MCF 10A (cell line): ENCODE measurements at regions of chr19 and their contacts with region 1.

Region 1: GRCh38 chr19:41641879-41642485 is 15.1 kb upstream of the CEACAM4 start:
- DNase-seq: peak; percentile 73
- H3K4me3 Mint-ChIP-seq: no peak overlapping the region
- H3K27ac Mint-ChIP-seq: no peak overlapping the region
- H3K4me1 Mint-ChIP-seq: no peaks in the 10 kb centered on the region
- H3K27me3 Mint-ChIP-seq: peaks cover 16% of the 10 kb centered on the region
- CTCF ChIP-seq: peak; percentile 85

Region 2: DNA sequence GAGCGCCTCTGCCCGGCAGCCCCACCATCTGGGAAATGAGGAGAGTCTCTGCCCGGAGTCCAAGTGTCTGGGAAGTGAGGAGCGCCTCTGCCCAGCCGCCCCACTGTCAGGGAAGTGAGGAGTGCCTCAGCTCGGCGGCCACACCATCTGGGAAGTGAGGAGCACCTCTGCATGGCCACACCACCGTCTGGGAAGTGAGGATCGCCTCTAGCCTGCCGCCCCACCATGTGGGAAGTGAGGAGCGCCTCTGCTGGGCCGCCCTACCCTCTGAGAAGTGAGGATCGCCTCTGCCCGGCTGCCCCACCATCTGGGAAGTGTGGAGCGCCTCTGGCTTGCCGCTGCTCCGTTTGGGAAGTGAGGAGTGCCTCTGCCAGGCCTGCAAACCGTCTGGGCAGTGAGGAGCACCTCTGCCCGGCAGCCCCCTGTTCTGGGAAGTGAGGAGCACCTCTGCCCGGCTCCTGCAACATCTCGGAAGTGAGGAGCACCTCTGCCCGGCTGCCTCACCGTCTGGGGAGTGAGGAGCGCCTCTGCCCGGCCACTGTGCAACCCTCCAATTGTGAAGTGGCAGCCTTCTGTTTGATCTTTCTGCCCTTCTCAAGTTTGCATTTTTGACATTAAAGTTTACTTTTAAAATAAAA is 126.8 kb before region 1 on chr19:
- CTCF ChIA-PET with region 1: no interaction called
- POLR2A ChIA-PET with region 1: no interaction called
- intact Hi-C with region 1: no loop called
- DNase-seq: no peak
- H3K4me3 Mint-ChIP-seq: no peak overlapping the region
- H3K27ac Mint-ChIP-seq: no peak overlapping the region
- H3K4me1 Mint-ChIP-seq: no peaks in the 10 kb centered on the region
- H3K27me3 Mint-ChIP-seq: peaks cover 95% of the 10 kb centered on the region
- CTCF ChIP-seq: no peak

Region 3: GRCh38 chr19:41626877-41627276 is 15.1 kb before region 1 on chr19 and contains the start of gene CEACAM4:
- CTCF ChIA-PET with region 1: interaction called, 10 read pairs
- POLR2A ChIA-PET with region 1: no interaction called
- intact Hi-C with region 1: no loop called
- DNase-seq: no peak
- H3K4me3 Mint-ChIP-seq: no peak within 1 kb of the TSS
- H3K27ac Mint-ChIP-seq: no peak within 1 kb of the TSS
- H3K4me1 Mint-ChIP-seq: no peaks in the 10 kb centered on the region
- H3K27me3 Mint-ChIP-seq: peaks cover 77% of the 10 kb centered on the region
- CTCF ChIP-seq: no peak
- total RNA-seq, gene CEACAM4: not detected in 2 replicates

Region 4: DNA sequence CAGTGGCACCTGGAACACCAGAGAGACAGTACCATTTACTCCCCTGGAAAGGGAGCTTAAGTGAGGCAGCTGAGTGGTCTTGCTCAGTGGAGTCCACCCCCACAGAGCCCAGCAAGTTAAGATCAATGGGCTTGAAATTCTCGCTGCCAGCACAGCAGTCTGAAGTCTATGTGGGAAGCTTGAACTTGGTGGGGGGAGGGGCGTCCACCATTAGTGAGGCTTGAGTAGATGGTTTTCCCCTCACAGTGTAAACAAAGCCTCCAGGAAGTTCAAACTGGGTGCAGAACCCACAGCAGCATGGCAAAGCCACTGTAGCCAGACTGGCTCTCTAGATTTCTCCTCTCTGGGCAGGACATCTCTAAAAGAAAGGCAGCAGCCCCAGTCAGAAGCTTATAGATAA is 15.2 kb after region 1 on chr19:
- CTCF ChIA-PET with region 1: interaction called, 20 read pairs
- POLR2A ChIA-PET with region 1: interaction called, 4 read pairs
- intact Hi-C with region 1: no loop called
- DNase-seq: no peak
- H3K4me3 Mint-ChIP-seq: no peak overlapping the region
- H3K27ac Mint-ChIP-seq: no peak overlapping the region
- H3K4me1 Mint-ChIP-seq: no peaks in the 10 kb centered on the region
- H3K27me3 Mint-ChIP-seq: peaks cover 89% of the 10 kb centered on the region
- CTCF ChIP-seq: no peak

Region 5: GRCh38 chr19:41691268-41691970 is 49.4 kb after region 1 on chr19:
- CTCF ChIA-PET with region 1: interaction called, 29 read pairs
- POLR2A ChIA-PET with region 1: no interaction called
- intact Hi-C with region 1: loop called (anchors 5 kb)
- DNase-seq: peak; percentile 40
- H3K4me3 Mint-ChIP-seq: no peak overlapping the region
- H3K27ac Mint-ChIP-seq: no peak overlapping the region
- H3K4me1 Mint-ChIP-seq: no peaks in the 10 kb centered on the region
- H3K27me3 Mint-ChIP-seq: peaks cover 57% of the 10 kb centered on the region
- CTCF ChIP-seq: peak; percentile 46

Region 6: GRCh38 chr19:41746593-41747227 is 104.7 kb after region 1 on chr19:
- CTCF ChIA-PET with region 1: interaction called, 72 read pairs
- POLR2A ChIA-PET with region 1: no interaction called
- intact Hi-C with region 1: loop called (anchors 5 kb)
- DNase-seq: peak; percentile 66
- H3K4me3 Mint-ChIP-seq: no peak overlapping the region
- H3K27ac Mint-ChIP-seq: no peak overlapping the region
- H3K4me1 Mint-ChIP-seq: no peaks in the 10 kb centered on the region
- H3K27me3 Mint-ChIP-seq: peaks cover 79% of the 10 kb centered on the region
- CTCF ChIP-seq: peak; percentile 69

Region 7: DNA sequence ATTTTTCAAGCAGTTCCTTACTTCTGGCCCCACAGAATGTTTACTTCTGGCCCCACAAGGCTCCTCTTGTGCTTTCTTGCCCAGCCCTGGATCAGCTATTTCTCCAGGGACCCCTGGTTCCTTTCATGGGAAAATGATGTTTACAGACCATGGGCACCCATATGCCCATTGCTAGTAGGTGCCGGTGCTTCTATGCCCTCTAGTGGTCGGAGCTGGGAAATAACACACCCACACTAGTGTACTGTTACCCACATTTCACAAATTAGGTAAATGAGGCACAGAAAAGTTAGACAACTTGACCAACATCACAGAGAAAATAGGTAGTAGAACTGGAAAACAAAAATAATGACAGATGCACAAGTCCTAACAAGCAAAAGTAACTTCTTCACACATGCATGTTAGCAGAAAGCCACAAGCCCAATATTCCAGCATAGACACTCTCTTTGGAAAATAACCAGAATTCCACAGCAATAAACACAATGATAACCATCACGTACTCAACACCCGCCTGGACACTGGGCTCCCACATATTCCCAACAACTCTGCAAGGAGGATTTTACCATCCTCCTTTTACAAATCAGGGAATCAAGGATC is 112.1 kb after region 1 on chr19:
- CTCF ChIA-PET with region 1: interaction called, 12 read pairs
- POLR2A ChIA-PET with region 1: no interaction called
- intact Hi-C with region 1: loop called (anchors 5 kb)
- DNase-seq: peak; percentile 65
- H3K4me3 Mint-ChIP-seq: no peak overlapping the region
- H3K27ac Mint-ChIP-seq: no peak overlapping the region
- H3K4me1 Mint-ChIP-seq: peaks cover 5% of the 10 kb centered on the region
- H3K27me3 Mint-ChIP-seq: peaks cover 62% of the 10 kb centered on the region
- CTCF ChIP-seq: peak; percentile 76

Region 8: GRCh38 chr19:41785653-41786052 is 143.7 kb after region 1 on chr19:
- CTCF ChIA-PET with region 1: interaction called, 30 read pairs
- POLR2A ChIA-PET with region 1: no interaction called
- intact Hi-C with region 1: loop called (anchors 5 kb)
- DNase-seq: peak; percentile 87
- H3K4me3 Mint-ChIP-seq: no peak overlapping the region
- H3K27ac Mint-ChIP-seq: no peak overlapping the region
- H3K4me1 Mint-ChIP-seq: peaks cover 5% of the 10 kb centered on the region
- H3K27me3 Mint-ChIP-seq: peaks cover 87% of the 10 kb centered on the region
- CTCF ChIP-seq: peak; percentile 84